IMR-90 (cell line): ENCODE measurements at regions of chr7 and their contacts with region 1.

Region 1: DNA sequence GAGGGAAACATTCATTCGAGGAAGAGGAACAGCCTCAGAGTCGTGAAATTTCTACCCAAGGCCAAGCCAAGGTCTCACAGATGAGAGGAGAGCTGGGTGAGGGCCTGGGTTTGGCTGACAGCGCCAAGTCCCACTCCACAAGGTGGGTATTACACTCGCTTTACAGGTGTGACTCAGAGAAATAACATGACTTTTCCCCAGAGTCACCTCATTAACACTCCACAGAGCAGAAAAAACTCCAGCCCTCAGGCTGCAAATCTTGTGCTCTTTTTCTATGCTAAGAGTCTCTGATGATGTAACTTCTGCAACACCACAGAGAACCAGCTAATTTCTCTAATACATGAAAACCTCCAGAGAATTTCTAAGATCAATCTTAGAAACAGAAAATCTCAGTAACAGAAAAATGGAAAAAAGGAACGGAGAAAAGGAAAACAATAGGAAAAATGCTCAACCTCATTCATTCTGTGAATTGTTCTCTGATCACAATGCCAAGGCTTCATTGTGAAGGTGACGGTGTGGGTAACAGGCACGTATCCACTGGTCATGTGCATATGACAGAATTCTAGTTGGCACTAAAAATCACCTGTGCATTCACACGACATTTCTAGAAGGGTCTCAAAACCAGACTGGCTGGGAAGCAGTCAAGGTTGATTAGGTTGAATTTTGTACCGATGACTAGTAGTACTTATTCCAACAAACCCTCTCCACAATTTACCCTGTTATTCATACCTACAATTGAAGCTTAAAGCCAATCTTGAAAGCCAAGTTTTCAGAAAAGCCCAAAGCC is 20.3 kb downstream of the YWHAG start:
- DNase-seq: no peak
- ATAC-seq: no peak
- H3K4me3 ChIP-seq: no peak overlapping the region
- H3K27ac ChIP-seq: peak overlapping the region; percentile 48; the same call in 1 of the 2 replicates
- H3K4me1 ChIP-seq: peaks cover 26% of the 10 kb centered on the region
- H3K27me3 ChIP-seq: no peaks in the 10 kb centered on the region
- CTCF ChIP-seq: no peak
- POLR2A ChIP-seq: no peak
- RAD21 ChIP-seq: no peak

Region 2: GRCh38 chr7:76359111-76359978 is 20.9 kb after region 1 on chr7:
- CTCF ChIA-PET with region 1: no interaction called
- POLR2A ChIA-PET with region 1: no interaction called
- dilution Hi-C with region 1: no loop called
- in situ Hi-C with region 1: no loop called
- intact Hi-C with region 1: loop called (anchors 2 kb)
- DNase-seq: peak; percentile 99
- ATAC-seq: peak; percentile 93
- H3K4me3 ChIP-seq: peak overlapping the region; percentile 98
- H3K27ac ChIP-seq: peak overlapping the region; percentile 99
- H3K4me1 ChIP-seq: peaks cover 12% of the 10 kb centered on the region
- H3K27me3 ChIP-seq: no peaks in the 10 kb centered on the region
- CTCF ChIP-seq: peak; percentile 94
- POLR2A ChIP-seq: peak; percentile 39
- RAD21 ChIP-seq: peak; percentile 66